Activated CD4-positive, alpha-beta memory T cell treated with anti-CD3 and anti-CD28 coated beads for 36 hours (primary cell): ENCODE measurements at regions of chr5 and their contacts with region 1.

Region 1: GRCh38 chr5:96868603-96869371 is 7.5 kb upstream of the ERAP2 start:
- DNase-seq: no peak
- H3K4me3 Mint-ChIP-seq: no peak overlapping the region
- H3K27ac Mint-ChIP-seq: no peak overlapping the region
- H3K4me1 Mint-ChIP-seq: peaks cover 50% of the 10 kb centered on the region
- H3K27me3 Mint-ChIP-seq: no peaks in the 10 kb centered on the region

Region 2: GRCh38 chr5:96816411-96816939 is 52.3 kb before region 1 on chr5:
- CTCF ChIA-PET with region 1: interaction called, 4 read pairs
- POLR2A ChIA-PET with region 1: no interaction called
- intact Hi-C with region 1: loop called (anchors 2 kb)
- DNase-seq: peak; percentile 70
- H3K4me3 Mint-ChIP-seq: peak overlapping the region; percentile 78
- H3K27ac Mint-ChIP-seq: peak overlapping the region; percentile 93
- H3K4me1 Mint-ChIP-seq: peaks cover 64% of the 10 kb centered on the region
- H3K27me3 Mint-ChIP-seq: no peaks in the 10 kb centered on the region

Region 3: GRCh38 chr5:96957254-96958049 is 88.7 kb after region 1 on chr5:
- CTCF ChIA-PET with region 1: interaction called, 7 read pairs
- POLR2A ChIA-PET with region 1: interaction called, 4 read pairs
- intact Hi-C with region 1: loop called (anchors 1 kb)
- DNase-seq: peak; percentile 72
- H3K4me3 Mint-ChIP-seq: peak overlapping the region; percentile 61
- H3K27ac Mint-ChIP-seq: peak overlapping the region; percentile 74
- H3K4me1 Mint-ChIP-seq: peaks cover 79% of the 10 kb centered on the region
- H3K27me3 Mint-ChIP-seq: no peaks in the 10 kb centered on the region

Region 4: GRCh38 chr5:97009212-97009898 is 140.6 kb after region 1 on chr5:
- CTCF ChIA-PET with region 1: interaction called, 5 read pairs
- POLR2A ChIA-PET with region 1: no interaction called
- intact Hi-C with region 1: loop called (anchors 2 kb)
- DNase-seq: no peak
- H3K4me3 Mint-ChIP-seq: no peak overlapping the region
- H3K27ac Mint-ChIP-seq: peak overlapping the region; percentile 47
- H3K4me1 Mint-ChIP-seq: peaks cover 19% of the 10 kb centered on the region
- H3K27me3 Mint-ChIP-seq: no peaks in the 10 kb centered on the region

Region 5: DNA sequence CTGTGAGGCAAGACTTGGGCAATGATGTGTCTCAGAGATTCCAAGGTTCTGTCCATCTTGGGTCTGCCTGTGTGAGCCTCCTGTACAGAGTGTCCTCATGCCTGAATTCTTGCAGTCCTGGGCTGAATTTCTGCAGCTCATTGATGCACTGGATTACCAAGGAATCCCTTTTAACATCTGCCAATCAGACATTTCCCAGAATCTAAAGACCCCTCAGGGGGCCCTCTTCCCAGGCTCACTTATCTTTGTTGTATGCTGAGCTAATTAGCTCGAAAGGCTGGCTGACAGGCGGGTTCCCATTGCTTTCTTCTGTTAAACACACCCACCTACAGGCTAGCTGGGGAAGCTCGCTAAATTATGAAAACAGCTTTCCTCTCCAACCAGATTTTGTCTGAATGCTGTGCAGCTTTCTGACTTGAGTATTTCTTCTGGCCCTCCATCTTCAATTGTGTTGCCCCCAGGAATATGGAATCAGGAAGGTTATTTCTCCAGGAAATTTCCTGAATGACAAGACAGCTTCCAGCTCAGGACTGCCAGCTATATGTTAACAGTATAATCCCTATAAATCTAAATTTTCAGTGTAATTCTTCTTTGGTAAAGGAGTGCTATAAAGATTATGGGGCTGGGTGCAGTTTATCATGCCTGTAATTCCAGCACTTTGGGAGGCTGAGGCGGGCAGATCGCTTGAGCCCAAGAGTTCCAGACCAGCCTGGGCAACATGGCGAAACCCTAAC is 273.9 kb after region 1 on chr5 and contains the start of gene LIX1:
- CTCF ChIA-PET with region 1: interaction called, 40 read pairs
- POLR2A ChIA-PET with region 1: no interaction called
- intact Hi-C with region 1: loop called (anchors 1 kb)
- DNase-seq: peak; percentile 43
- H3K4me3 Mint-ChIP-seq: no peak within 1 kb of the TSS
- H3K27ac Mint-ChIP-seq: no peak within 1 kb of the TSS
- H3K4me1 Mint-ChIP-seq: no peaks in the 10 kb centered on the region
- H3K27me3 Mint-ChIP-seq: peaks cover 4% of the 10 kb centered on the region
- total RNA-seq, gene LIX1: not detected